Mucosa of descending colon (tissue), 3 donors: ENCODE measurements at regions of chr20 and their contacts with region 1.

Region 1: DNA sequence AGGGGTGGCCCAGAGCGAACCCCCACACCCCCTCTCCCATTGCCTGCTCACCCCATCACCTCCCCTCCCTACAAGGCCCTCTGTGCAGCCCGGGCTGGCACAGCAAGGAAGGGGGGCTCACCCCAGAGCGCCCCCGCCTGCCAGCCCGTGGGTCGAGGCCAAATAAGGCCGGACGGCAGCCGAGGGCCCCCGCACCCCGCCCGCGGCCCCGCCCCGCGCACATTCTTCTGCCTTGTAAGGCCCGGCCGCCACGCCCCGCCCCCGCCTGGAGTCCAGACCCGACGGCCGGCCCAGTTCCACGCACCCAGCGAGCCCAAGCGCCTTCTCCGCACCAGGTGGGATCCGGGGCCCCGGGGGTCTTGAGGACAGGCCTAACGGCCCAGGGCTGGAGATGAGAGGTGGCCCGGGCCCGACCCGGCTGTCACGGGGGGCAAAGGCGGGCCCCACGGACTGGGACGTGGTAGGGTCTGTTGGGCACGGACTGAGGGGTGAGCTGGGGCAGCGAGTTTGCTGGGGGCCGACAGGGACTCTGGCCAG is at the start of gene MYL9:
- DNase-seq: peak; percentile 81 to 85 (median 84)
- ATAC-seq: peak; percentile 82
- H3K4me3 ChIP-seq: peak within 1 kb of the TSS; percentile 24
- H3K4me1 ChIP-seq: no peaks in the 10 kb centered on the region
- CTCF ChIP-seq: no peak
- total RNA-seq, gene MYL9: 74.3 to 3,203 (median 259) TPM

Region 2: DNA sequence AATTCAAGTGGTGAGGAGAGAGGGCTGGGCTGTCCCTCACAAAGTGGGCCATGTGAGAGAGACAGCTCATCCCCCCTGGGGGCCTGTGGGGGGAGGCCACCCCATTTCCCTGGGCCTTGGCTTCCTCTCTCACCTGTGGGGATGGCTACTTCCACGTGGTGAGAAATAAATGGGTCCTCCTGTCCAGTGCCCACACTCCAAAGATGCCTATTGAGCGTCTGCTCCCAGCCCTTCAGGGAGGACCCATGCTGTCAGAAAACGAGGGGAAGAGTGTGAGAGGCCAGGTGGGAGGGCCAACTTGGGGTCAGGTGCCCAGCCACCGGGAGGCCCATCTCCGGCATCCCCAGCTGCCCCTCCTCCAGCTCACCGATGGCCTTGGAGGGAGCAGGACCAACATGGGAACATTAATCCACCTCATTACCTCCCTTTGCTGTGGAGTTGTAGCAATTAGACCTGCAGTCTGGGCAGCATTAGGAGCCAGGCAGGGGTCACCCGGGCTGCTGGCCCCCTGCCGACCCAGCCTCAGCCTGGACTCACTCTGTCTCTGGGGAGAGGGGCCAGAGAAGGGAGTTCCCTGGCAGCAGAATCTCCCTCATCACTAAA is 210.2 kb before region 1 on chr20:
- intact Hi-C with region 1: no loop called
- DNase-seq: no peak
- ATAC-seq: no peak
- H3K4me3 ChIP-seq: no peak overlapping the region
- H3K4me1 ChIP-seq: no peaks in the 10 kb centered on the region
- CTCF ChIP-seq: no peak

Region 3: GRCh38 chr20:36460648-36461599 is 80.4 kb before region 1 on chr20:
- intact Hi-C with region 1: loop called in 1 of 2 experiments (anchors 10 kb)
- DNase-seq: peak; percentile 95 to 97 (median 95)
- ATAC-seq: peak; percentile 82
- H3K4me3 ChIP-seq: peak overlapping the region; percentile 28
- H3K4me1 ChIP-seq: peaks cover 24% of the 10 kb centered on the region
- CTCF ChIP-seq: no peak